Aorta (tissue), 5 donors: ENCODE measurements at regions of chr19 and their contacts with region 1.

Region 1: GRCh38 chr19:43950834-43951645 is at the start of gene ZNF221:
- DNase-seq: peak; percentile 94 to 95
- ATAC-seq: peak; percentile 98
- H3K4me3 ChIP-seq: peak within 1 kb of the TSS; percentile 42 to 86
- H3K27ac ChIP-seq: peak within 1 kb of the TSS in 1 of 2 donors; percentile 9
- H3K4me1 ChIP-seq: no peaks in the 10 kb centered on the region
- H3K27me3 ChIP-seq: no peaks in the 10 kb centered on the region
- total RNA-seq, gene ZNF221: 5.9 to 8.8 TPM

Region 2: GRCh38 chr19:43826787-43827754 is 124.0 kb before region 1 on chr19 and contains the start of gene ZNF283:
- intact Hi-C with region 1: loop called in 1 of 2 experiments (anchors 10 kb)
- DNase-seq: peak; percentile 94 to 95
- ATAC-seq: peak; percentile 97
- H3K4me3 ChIP-seq: peak within 1 kb of the TSS; percentile 35 to 37
- H3K27ac ChIP-seq: no peak within 1 kb of the TSS
- H3K4me1 ChIP-seq: no peaks in the 10 kb centered on the region
- H3K27me3 ChIP-seq: no peaks in the 10 kb centered on the region
- total RNA-seq, gene ZNF283: 12.0 to 15.2 TPM

Region 3: GRCh38 chr19:43934985-43935708 is 15.9 kb before region 1 on chr19 and contains the start of gene ZNF45:
- intact Hi-C with region 1: loop called in 1 of 2 experiments (anchors 1 kb)
- DNase-seq: peak; percentile 93 to 94
- ATAC-seq: peak; percentile 97
- H3K4me3 ChIP-seq: peak within 1 kb of the TSS; percentile 73 to 95
- H3K27ac ChIP-seq: peak within 1 kb of the TSS in 1 of 2 donors; percentile 82
- H3K4me1 ChIP-seq: no peaks in the 10 kb centered on the region
- H3K27me3 ChIP-seq: no peaks in the 10 kb centered on the region
- total RNA-seq, gene ZNF45: 14.3 to 18.5 TPM

Region 4: DNA sequence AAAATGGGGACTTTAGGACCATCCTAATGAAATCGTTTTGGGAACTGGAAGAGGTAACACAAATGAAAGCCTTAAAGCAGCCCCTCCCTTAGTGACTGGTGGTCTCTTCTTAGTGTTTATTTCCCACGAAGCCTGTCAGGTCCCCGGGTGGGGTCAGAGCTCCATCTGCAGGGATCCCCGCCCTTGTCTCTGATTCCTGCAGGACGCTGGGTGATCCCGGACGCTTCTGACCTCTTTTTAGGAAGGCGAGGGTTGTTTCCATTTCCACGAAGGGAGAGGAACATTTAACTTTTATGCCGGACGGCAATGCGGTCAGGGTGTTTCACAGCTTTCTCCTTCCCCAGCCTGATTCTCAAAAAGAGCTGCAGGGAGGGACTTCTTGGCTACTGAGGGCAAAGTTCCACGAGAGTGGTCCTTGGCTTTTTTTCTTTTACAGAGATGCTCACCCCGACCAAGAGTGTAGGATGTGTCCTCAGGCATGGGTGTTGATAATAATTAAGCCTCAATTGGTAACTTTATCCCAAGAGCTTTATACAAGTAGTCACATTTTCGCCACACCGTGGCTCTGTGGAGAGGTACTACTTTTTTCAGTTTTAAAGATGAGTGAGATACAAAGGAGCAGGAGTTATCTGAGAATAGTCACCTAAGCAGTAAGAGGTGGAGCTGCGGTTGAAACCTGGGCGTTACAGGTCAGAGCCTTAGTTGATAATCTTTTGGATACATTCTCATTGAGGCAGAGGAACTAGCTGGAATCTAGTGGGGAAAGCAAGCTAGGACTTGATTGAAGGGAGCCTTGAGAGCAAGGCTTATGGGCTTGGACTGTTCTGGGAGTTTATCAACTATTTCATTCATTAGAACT is 121.7 kb after region 1 on chr19:
- intact Hi-C with region 1: no loop called
- DNase-seq: no peak
- ATAC-seq: no peak
- H3K4me3 ChIP-seq: peak overlapping the region; percentile 42 to 95
- H3K27ac ChIP-seq: no peak overlapping the region
- H3K4me1 ChIP-seq: peaks cover 0 to 5% of the 10 kb centered on the region in 2 donors
- H3K27me3 ChIP-seq: no peaks in the 10 kb centered on the region

Region 5: DNA sequence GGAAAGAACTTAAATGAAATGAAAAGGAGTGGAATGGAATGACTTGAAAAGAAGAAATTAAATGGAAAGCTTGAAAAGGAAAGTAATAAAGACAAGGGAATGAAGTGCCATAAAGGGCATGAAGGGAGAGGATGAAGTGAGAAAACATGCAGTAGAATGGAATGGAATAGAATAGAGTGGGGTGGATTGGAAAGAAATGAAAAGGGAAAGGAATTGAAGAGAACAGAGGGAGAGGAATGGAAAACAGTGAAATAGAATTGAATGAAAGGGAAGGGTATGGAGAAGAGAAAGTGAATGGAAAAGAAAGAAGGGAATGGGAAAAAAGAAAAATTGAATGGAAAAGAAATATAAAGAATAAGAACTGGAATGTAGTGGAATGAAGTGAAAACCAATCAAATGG is 558.4 kb after region 1 on chr19:
- intact Hi-C with region 1: no loop called
- DNase-seq: no peak
- ATAC-seq: no peak
- H3K4me3 ChIP-seq: no peak overlapping the region
- H3K27ac ChIP-seq: no peak overlapping the region
- H3K4me1 ChIP-seq: no peaks in the 10 kb centered on the region
- H3K27me3 ChIP-seq: no peaks in the 10 kb centered on the region